GM10248 (cell line): ENCODE measurements at regions of chr6 and their contacts with region 1.

Region 1: DNA sequence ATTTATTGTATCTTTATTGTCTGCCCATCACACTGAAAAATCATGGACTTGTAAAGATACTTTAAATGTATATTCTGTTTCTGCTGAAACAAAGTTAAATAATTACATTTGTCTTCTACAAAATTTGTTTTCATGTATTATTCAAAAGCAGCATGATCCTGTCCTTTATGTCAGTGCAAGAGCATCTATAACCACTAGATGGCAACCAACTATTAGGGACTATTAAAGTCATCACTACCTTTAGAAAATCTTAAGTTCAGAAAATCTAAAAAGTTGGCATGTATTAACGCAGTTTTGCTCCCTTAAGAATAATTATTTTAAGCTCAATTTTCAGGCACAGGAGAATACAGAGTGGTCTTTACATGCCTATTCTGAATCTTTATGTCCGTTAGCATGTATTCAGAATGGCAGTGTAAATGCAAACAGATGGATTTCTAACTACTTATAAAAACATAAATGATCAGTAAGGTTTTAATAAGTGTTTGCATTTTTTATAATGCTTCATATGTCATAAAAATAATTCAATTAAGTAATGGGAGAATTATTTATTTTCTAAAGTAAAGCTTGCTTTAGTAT is 17.8 kb downstream of the TMEM30A start:
- DNase-seq: peak; percentile 34
- CTCF ChIP-seq: peak; percentile 68

Region 2: DNA sequence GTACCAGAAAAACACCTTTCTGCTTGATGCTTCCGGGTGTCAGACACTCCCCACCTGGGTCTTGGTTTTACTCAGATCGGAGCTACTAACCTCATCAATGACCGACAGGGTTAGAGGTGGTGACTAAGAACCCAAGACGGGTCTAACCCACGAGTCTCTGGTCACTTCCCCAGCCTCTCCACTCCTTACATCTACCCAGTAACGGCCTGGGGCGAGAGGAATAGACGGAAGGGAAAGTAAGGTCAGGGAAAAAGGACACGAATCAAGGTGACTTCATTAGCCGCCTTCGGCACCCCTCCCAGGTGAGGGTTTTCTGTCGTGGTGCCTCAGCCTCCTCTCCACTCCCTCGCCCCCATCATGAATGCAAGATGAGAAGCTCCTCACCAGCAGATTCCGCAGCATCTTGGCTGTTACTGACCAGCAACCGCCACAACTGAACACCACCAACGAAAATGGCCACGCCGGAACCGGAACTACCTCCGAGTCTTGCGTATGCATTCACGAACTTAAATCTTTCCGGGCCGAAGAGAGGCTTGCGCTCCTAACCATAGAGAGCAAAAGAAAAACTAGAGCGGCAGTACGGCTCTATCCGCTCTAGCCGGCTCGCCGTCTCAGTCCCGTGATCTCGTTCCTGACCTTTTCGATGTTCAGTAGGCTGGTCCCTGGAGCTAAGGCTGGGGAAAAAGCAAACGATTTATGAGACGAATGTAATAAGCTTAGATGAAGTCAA is 23.3 kb before region 1 on chr6 and contains the start of gene COX7A2:
- CTCF ChIA-PET with region 1: interaction called, 12 read pairs
- POLR2A ChIA-PET with region 1: no interaction called
- DNase-seq: peak; percentile 84
- CTCF ChIP-seq: no peak

Region 3: DNA sequence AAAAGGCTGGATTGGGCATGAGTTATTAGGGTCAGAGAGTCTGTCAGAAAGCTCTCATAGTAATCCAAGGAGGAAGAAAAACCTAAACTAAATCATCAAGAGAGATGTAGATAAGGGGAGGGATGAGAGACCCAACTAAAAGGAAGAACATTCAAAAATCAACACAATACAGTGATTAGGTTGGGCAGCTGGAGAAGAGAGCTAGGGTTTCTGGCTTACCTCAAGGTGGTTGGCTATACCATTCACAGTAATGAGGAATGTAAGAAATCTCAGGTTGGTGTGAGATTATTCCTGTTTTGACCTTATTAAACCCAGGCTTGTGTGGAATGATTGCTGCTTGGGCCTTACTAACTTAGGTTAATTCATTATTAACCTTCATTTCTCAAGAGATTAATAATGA is 17.0 kb before region 1 on chr6:
- CTCF ChIA-PET with region 1: interaction called, 27 read pairs
- POLR2A ChIA-PET with region 1: no interaction called
- DNase-seq: no peak
- CTCF ChIP-seq: no peak

Region 4: DNA sequence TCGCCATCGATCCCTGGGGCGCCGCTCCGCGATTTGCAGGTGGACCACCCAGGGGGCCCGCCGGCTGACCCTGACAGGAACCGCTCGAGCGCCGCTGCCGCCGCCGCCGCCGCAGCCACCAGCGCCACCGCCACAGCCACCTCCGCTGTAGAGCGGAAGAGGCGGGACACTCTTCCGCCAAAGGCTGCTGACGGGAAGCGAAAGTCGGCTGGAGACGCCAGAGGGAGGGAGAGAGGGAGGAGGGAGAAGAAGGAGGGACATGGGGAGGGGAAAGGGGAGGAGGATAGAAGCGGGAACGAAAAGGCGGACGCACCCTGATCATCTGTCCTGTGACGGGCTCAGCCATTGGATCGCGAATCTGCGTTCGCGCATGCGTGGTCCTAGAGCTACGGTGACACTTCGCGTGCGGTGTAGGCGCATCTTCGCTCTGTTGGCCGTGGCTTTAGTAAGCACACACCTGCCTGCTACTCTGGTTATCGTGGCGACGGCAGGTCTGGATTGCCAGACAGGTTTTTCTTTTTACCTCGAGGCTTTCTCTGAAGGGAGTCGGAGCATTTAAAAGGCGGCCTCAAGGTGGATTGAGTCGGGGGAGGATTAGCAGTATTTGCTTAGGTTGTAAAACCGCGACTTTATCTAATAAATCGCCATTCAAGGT is 18.0 kb after region 1 on chr6 and contains the start of gene TMEM30A:
- CTCF ChIA-PET with region 1: interaction called, 41 read pairs
- POLR2A ChIA-PET with region 1: interaction called, 3 read pairs
- DNase-seq: peak; percentile 94
- CTCF ChIP-seq: no peak

Region 5: DNA sequence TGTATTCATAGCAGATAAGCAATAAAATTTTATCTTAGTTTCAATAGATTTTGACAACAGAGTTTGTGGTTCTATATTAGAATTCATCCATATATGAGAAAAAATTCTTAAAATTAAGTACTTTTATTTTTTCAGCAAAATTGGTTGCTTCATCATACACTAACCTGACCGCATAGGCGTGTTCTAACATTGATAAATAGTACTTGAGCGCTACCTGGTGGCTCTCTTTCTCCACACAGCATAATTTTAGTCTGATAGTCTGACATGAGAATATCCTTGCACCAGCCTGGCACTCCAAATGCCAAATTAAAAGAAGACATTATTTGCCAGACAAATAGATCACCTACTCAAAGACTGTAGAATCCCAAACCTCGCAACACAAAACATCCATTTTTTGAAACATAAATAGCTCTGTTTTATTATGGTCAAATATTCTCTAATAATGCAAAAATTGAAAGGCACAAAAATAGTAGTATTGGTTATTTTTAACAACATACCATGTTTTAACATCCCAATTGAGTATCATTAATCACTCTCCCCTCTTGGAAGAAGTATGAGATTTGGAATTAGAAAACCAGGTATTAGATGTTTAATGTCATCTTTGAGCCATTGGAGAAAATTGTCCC is 259.8 kb after region 1 on chr6:
- CTCF ChIA-PET with region 1: interaction called, 49 read pairs
- POLR2A ChIA-PET with region 1: no interaction called
- DNase-seq: peak; percentile 46
- CTCF ChIP-seq: peak; percentile 78

Region 6: DNA sequence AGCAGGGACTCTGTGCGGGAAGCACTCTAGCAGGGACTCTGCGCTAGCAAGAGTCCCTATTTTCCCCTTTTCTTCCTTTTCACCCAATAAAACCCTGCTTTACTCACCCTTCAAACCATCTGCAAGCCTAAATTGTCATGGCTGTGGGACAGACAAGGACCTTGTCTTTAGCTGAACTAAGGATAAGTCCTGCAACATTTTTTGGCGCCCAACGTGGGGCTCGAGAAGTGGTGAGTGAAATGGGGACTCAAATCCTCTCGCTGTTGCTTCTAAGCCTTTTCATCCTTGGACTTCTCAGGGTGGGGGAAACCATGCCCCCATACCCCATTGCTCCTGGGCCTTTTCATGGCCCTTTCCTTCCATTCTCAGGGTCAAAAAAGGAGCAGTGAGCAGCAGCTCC is 759.3 kb after region 1 on chr6:
- CTCF ChIA-PET with region 1: no interaction called
- POLR2A ChIA-PET with region 1: no interaction called
- DNase-seq: no peak
- CTCF ChIP-seq: no peak